CD8-positive, alpha-beta memory T cell (primary cell): ENCODE measurements at regions of chr19 and their contacts with region 1.

Region 1: GRCh38 chr19:18588611-18589379 is at the start of gene REX1BD:
- DNase-seq: peak; percentile 80 to 93 (median 84)
- H3K4me3 ChIP-seq: peak within 1 kb of the TSS; percentile 83
- H3K4me3 Mint-ChIP-seq: peak within 1 kb of the TSS; percentile 88 to 97 (median 91)
- H3K27ac ChIP-seq: peak within 1 kb of the TSS; percentile 87
- H3K27ac Mint-ChIP-seq: peak within 1 kb of the TSS; percentile 90 to 96 (median 93)
- H3K4me1 ChIP-seq: peaks cover 30% of the 10 kb centered on the region
- H3K4me1 Mint-ChIP-seq: peaks cover 29 to 45% (median 37%) of the 10 kb centered on the region in 3 donors
- H3K27me3 ChIP-seq: no peaks in the 10 kb centered on the region
- H3K27me3 Mint-ChIP-seq: peaks cover 0 to 3% of the 10 kb centered on the region in 2 donors
- total RNA-seq, gene REX1BD: 107 to 110 TPM

Region 2: DNA sequence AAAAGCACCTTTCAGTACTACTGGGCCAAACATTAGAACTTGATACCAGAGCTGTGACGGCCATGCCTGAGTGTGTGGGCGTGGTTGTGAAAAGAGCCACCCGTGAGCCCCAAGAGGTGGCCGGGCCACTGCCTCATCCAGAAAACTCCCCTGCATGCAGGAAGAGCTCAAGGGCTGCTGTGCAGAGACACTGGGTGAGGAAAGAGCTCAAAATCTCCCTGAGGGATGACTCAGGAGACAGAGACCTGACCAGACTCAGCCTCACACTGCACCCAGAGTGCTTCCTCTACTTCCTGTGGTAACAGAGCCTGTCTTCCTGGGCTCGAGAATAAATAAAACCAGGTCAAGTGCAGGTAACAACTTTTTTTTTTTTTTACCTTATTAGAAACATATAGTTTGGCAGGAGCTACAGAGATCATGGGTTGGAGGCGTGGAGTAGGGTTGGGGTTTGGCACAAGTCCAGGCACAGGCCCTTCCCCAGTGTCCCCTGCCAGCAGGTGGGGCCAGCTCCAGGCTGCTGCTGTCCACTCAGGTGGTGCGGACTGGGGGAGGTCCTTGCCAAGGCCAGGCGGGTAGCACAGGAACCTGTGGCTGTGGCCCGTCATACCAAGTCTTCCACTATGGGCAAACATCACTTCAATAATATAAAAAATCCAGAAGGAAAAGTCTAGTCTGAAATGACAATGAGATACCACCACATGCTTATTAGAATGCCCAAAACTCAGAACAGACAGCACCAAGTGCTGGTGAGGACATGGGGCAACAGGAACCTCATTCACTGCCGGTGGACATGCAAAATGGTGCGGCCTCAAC is 92.4 kb before region 1 on chr19:
- CTCF ChIA-PET with region 1: interaction called, 14 read pairs
- POLR2A ChIA-PET with region 1: interaction called, 7 read pairs
- DNase-seq: peak; percentile 36 to 90 (median 79)
- H3K4me3 ChIP-seq: peak overlapping the region; percentile 57
- H3K4me3 Mint-ChIP-seq: peak overlapping the region; percentile 81 to 93 (median 85)
- H3K27ac ChIP-seq: peak overlapping the region; percentile 87
- H3K27ac Mint-ChIP-seq: peak overlapping the region; percentile 68 to 100 (median 99)
- H3K4me1 ChIP-seq: peaks cover 96% of the 10 kb centered on the region
- H3K4me1 Mint-ChIP-seq: peaks cover 80 to 96% (median 89%) of the 10 kb centered on the region in 3 donors
- H3K27me3 ChIP-seq: no peaks in the 10 kb centered on the region
- H3K27me3 Mint-ChIP-seq: peaks cover 0 to 1% of the 10 kb centered on the region in 2 donors

Region 3: GRCh38 chr19:18542936-18543815 is 45.6 kb before region 1 on chr19 and contains the start of gene FKBP8:
- CTCF ChIA-PET with region 1: interaction called, 7 read pairs
- POLR2A ChIA-PET with region 1: interaction called, 11 read pairs
- DNase-seq: peak; percentile 87 to 95 (median 90)
- H3K4me3 ChIP-seq: peak within 1 kb of the TSS; percentile 55
- H3K4me3 Mint-ChIP-seq: peak within 1 kb of the TSS; percentile 88 to 97 (median 93)
- H3K27ac ChIP-seq: peak within 1 kb of the TSS; percentile 73
- H3K27ac Mint-ChIP-seq: peak within 1 kb of the TSS; percentile 89 to 99 (median 97)
- H3K4me1 ChIP-seq: peaks cover 17% of the 10 kb centered on the region
- H3K4me1 Mint-ChIP-seq: peaks cover 17 to 30% (median 19%) of the 10 kb centered on the region in 3 donors
- H3K27me3 ChIP-seq: no peaks in the 10 kb centered on the region
- H3K27me3 Mint-ChIP-seq: no peaks in the 10 kb centered on the region
- total RNA-seq, gene FKBP8: 161 to 170 TPM

Region 4: DNA sequence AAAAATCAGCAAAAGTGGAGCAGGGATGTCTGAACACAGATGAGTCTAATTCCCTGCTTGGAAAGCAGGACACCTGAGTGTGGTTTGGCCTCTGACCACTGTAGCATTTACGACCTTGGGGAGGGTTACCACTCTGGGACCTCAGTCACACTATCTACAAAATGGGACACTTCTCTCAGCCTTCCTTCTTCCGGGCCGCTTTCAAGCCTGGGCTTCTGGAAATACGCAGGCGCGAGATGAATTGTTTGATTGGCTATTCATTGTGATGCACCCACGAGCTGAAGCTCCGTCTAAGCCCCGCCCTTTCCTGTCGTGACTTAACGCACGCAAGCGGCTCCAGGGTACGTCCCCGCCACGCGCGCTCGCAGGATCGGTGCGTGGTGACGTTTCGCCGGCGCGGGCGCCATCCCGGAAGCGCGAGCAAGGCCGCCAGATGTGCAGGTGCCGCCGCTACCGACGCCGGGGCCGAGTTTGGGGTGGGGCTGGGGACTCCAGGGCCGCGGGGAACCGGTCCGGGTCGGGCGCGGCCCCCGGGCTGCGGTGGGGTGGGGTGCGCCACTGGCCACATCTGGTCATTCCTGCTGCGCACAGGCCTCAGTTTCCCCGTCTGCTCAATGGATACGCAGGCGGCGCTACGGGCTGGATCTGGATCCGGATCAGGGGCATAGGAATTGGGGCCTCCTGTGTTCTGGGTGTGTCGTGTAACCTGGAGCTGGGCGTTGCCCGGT is 31.2 kb before region 1 on chr19 and contains the start of gene KXD1:
- CTCF ChIA-PET with region 1: interaction called, 9 read pairs
- POLR2A ChIA-PET with region 1: interaction called, 16 read pairs
- DNase-seq: peak; percentile 96 to 99 (median 98)
- H3K4me3 ChIP-seq: peak within 1 kb of the TSS; percentile 98
- H3K4me3 Mint-ChIP-seq: peak within 1 kb of the TSS; percentile 90 to 94 (median 92)
- H3K27ac ChIP-seq: peak within 1 kb of the TSS; percentile 96
- H3K27ac Mint-ChIP-seq: peak within 1 kb of the TSS; percentile 93 to 99 (median 98)
- H3K4me1 ChIP-seq: peaks cover 23% of the 10 kb centered on the region
- H3K4me1 Mint-ChIP-seq: peaks cover 18 to 34% (median 29%) of the 10 kb centered on the region in 3 donors
- H3K27me3 ChIP-seq: no peaks in the 10 kb centered on the region
- H3K27me3 Mint-ChIP-seq: no peaks in the 10 kb centered on the region
- total RNA-seq, gene KXD1: 127 to 128 TPM

Region 5: DNA sequence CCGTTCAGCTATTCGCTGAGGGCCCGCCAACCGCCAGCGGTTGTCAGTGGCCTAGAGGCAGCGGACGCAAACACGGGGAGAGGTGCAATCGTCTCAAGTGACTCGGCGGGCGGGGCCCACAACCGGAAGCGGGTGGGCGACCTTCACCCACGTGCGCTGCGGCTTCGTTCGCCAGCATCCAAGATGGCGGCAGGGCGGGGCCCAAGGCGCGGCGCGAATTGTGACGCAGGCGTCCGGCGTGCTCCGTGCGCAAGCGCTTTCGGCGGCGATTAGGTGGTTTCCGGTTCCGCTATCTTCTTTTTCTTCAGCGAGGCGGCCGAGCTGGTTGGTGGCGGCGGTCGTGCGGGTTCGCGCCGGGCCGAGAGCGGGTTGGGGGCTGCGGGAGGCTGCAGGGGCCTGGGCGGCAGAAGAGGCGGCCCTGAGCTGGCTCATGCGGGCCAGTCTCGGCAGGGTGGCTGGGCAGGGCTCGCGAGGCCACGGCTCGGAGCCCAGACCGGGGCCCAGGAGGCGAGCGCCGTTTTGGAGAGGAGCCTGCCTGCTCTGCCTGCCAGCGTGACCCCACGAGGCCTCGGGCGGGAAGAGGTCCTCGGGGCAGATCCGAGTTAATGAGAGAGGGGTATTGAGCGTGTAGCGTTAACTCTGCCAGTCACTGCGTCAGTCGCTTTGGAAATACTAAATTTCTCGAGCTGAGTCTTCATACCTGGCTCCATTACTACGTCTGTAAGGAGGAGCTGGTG is 17.1 kb before region 1 on chr19 and contains the start of gene UBA52:
- CTCF ChIA-PET with region 1: interaction called, 41 read pairs
- POLR2A ChIA-PET with region 1: interaction called, 39 read pairs
- DNase-seq: peak; percentile 98 to 99 (median 99)
- H3K4me3 ChIP-seq: peak within 1 kb of the TSS; percentile 77
- H3K4me3 Mint-ChIP-seq: peak within 1 kb of the TSS; percentile 90 to 97 (median 93)
- H3K27ac ChIP-seq: peak within 1 kb of the TSS; percentile 96
- H3K27ac Mint-ChIP-seq: peak within 1 kb of the TSS; percentile 92 to 98 (median 94)
- H3K4me1 ChIP-seq: peaks cover 22% of the 10 kb centered on the region
- H3K4me1 Mint-ChIP-seq: peaks cover 19 to 33% (median 22%) of the 10 kb centered on the region in 3 donors
- H3K27me3 ChIP-seq: no peaks in the 10 kb centered on the region
- H3K27me3 Mint-ChIP-seq: no peaks in the 10 kb centered on the region
- total RNA-seq, gene UBA52: 1,684 to 1,700 TPM

Region 6: DNA sequence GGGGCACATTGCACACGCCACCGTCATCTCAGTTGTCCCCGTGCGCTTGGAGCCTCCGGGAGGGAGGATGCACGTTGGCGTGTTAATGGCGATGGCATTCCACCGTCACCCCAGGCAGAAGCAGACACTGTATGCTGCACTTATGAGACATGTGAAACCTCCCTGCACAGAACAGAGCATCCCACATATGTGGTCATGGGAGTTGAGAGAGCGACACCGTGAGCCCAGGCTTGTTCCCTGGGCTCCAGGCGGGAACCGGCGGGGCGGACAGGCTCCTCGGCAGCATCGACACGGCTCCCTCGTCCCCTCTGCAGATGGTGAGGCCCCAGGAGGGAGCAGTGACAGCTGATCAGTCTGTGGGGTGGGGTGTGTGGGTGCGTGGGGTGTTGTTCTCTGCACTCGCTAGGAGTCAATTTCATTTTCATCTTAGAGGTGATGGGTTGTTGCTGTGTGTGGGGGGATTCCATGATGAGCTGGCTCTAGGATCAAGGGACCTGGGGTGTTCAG is 135.1 kb after region 1 on chr19:
- CTCF ChIA-PET with region 1: no interaction called
- POLR2A ChIA-PET with region 1: no interaction called
- DNase-seq: no peak
- H3K4me3 ChIP-seq: no peak overlapping the region
- H3K4me3 Mint-ChIP-seq: no peak overlapping the region
- H3K27ac ChIP-seq: no peak overlapping the region
- H3K27ac Mint-ChIP-seq: no peak overlapping the region
- H3K4me1 ChIP-seq: no peaks in the 10 kb centered on the region
- H3K4me1 Mint-ChIP-seq: peaks cover 0 to 14% (median 7%) of the 10 kb centered on the region in 3 donors
- H3K27me3 ChIP-seq: no peaks in the 10 kb centered on the region
- H3K27me3 Mint-ChIP-seq: no peaks in the 10 kb centered on the region

Region 7: DNA sequence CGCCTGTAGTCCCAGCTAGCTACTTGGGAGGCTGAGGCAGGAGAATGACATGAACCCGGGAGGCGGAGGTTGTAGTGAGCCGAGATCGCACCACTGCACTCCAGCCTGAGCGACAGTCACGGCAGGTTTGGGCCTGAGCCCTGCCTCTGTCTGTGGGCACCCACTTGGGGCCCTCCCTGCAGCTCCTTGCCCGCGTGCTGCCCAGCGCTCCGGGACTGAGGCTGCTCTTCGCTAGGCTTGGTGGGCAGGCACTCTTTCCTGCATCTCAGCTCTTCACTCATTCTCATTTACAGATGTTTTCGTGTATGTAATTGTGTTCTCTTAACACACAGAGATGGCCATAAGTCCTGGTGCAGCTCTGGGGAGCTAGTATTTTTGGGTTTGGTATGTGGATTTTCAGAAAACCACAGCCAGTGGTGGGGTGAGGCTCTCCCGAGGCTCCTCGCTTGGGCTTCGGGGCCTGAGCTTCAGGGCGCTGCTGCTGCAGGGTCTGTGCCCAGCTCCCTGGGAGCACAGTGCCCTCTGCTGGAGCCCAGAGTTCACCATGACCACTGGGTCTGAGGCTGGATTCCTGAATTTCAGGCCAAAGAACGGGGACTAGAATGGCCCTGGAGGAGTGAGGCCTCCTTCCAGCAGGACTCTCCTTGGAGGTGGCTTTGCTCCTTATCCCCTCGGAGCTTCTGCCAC is 258.2 kb after region 1 on chr19:
- CTCF ChIA-PET with region 1: interaction called, 25 read pairs
- POLR2A ChIA-PET with region 1: interaction called, 3 read pairs
- DNase-seq: peak; percentile 47 to 75 (median 51)
- H3K4me3 ChIP-seq: no peak overlapping the region
- H3K4me3 Mint-ChIP-seq: peak overlapping the region in 4 of 7 donors; percentile 37 to 66 (median 52)
- H3K27ac ChIP-seq: no peak overlapping the region
- H3K27ac Mint-ChIP-seq: peak overlapping the region in 6 of 8 donors; percentile 7 to 91 (median 49)
- H3K4me1 ChIP-seq: peaks cover 48% of the 10 kb centered on the region
- H3K4me1 Mint-ChIP-seq: peaks cover 60 to 77% (median 77%) of the 10 kb centered on the region in 3 donors
- H3K27me3 ChIP-seq: no peaks in the 10 kb centered on the region
- H3K27me3 Mint-ChIP-seq: peaks cover 0 to 3% of the 10 kb centered on the region in 2 donors

Region 8: DNA sequence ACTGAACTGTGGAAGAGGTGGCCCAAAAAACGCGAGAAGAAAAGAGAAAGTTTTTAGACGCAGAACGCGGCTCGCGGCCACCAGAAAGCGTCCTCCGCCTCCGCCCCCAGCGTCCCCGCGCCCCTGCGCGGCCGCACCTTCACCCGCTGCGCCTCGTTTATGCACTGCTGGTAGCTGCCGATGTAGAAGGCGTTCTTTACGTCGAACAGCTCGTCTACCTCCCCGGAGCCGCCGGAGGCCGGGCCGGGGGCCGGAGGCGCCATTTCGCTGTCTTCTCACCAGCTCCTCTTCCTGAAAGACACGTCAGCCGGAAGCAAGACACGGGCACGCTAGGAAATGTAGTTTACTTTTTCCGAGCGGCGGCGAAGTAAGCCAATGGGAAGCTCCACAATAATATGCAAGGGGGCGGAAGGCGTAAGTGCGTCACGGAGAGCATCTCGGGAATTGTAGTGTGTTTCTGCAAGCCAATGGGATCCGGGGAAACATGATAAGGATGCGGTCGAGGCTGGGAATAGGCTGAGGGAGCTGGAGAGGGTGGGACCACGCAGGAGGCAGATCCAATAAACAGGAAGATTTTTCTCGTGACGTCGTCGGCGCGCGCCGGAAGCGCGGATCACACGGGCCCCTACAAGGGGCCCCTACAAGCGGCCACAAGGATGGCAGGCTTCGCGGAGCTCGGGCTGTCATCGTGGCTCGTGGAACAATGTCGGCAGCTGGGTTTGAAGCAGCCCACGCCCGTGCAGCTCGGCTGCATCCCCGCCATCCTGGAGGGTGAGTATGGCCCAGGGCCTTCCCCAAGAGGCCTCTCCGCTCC is 330.5 kb after region 1 on chr19 and contains the starts of genes COPE and DDX49:
- CTCF ChIA-PET with region 1: interaction called, 3 read pairs
- POLR2A ChIA-PET with region 1: interaction called, 11 read pairs
- DNase-seq: peak; percentile 91 to 99 (median 98)
- H3K4me3 ChIP-seq: peak within 1 kb of the TSS; percentile 94
- H3K4me3 Mint-ChIP-seq: peak within 1 kb of the TSS; percentile 85 to 97 (median 95)
- H3K27ac ChIP-seq: peak within 1 kb of the TSS; percentile 94
- H3K27ac Mint-ChIP-seq: peak within 1 kb of the TSS; percentile 64 to 99 (median 96)
- H3K4me1 ChIP-seq: peaks cover 25% of the 10 kb centered on the region
- H3K4me1 Mint-ChIP-seq: peaks cover 37 to 50% (median 43%) of the 10 kb centered on the region in 3 donors
- H3K27me3 ChIP-seq: no peaks in the 10 kb centered on the region
- H3K27me3 Mint-ChIP-seq: no peaks in the 10 kb centered on the region
- total RNA-seq, gene COPE: 177 to 184 TPM
- total RNA-seq, gene DDX49: 92.5 to 95.1 TPM